Activated B cell treated with CpG ODN at 0.5 μM for 24 hours (primary cell): ENCODE measurements at regions of chr7 and their contacts with region 1.

Region 1: GRCh38 chr7:116984917-116985316 is 31.6 kb downstream of the ST7 start:
- DNase-seq: no peak
- ATAC-seq: peak; percentile 49
- H3K4me3 Mint-ChIP-seq: no peak overlapping the region
- H3K27ac Mint-ChIP-seq: no peak overlapping the region
- H3K4me1 Mint-ChIP-seq: no peaks in the 10 kb centered on the region
- H3K27me3 Mint-ChIP-seq: no peaks in the 10 kb centered on the region
- CTCF ChIP-seq: peak; percentile 76

Region 2: GRCh38 chr7:116953727-116954442 is 31.0 kb before region 1 on chr7:
- CTCF ChIA-PET with region 1: interaction called, 5 read pairs
- POLR2A ChIA-PET with region 1: interaction called, 3 read pairs
- intact Hi-C with region 1: loop called (anchors 2 kb)
- DNase-seq: peak; percentile 60
- ATAC-seq: peak; percentile 59
- H3K4me3 Mint-ChIP-seq: peak overlapping the region; percentile 93
- H3K27ac Mint-ChIP-seq: peak overlapping the region; percentile 86
- H3K4me1 Mint-ChIP-seq: peaks cover 27% of the 10 kb centered on the region
- H3K27me3 Mint-ChIP-seq: no peaks in the 10 kb centered on the region
- CTCF ChIP-seq: no peak

Region 3: GRCh38 chr7:117014673-117015133 is 29.8 kb after region 1 on chr7:
- CTCF ChIA-PET with region 1: interaction called, 39 read pairs
- POLR2A ChIA-PET with region 1: interaction called, 4 read pairs
- intact Hi-C with region 1: loop called (anchors 1 kb)
- DNase-seq: no peak
- ATAC-seq: no peak
- H3K4me3 Mint-ChIP-seq: no peak overlapping the region
- H3K27ac Mint-ChIP-seq: no peak overlapping the region
- H3K4me1 Mint-ChIP-seq: peaks cover 50% of the 10 kb centered on the region
- H3K27me3 Mint-ChIP-seq: peaks cover 3% of the 10 kb centered on the region
- CTCF ChIP-seq: no peak

Region 4: DNA sequence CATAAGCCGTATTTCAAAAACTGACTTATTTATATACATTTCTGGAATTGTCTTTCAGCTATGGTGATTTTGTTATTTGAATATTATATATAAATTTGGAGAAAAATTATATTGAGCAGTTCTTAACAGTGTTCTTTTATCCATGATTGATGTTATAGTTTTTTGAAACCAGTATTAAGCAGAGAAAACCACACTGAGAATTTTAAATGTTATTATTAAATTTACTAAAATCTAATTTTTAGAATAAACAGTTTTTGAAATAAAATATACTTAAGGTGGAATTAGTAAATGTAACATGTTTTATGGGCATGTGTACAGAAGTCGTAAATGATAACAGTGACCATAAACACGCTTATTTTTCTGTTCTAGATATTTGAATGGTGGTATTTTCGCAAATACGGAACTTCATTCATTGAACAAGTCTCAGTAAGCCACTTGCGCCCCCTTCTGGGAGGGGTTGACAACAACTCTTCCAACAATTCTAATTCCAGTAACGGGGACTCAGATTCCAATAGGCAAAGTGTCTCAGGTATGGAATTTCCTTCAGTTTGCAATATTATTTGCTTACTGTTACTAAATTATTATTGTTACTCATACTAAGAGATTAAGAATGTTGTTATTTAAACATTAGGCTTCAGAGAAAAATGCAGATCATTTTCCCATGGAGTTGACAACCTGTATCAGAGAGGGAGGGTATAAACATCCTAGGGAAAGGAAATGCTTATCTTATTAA is 134.4 kb after region 1 on chr7:
- CTCF ChIA-PET with region 1: interaction called, 225 read pairs
- POLR2A ChIA-PET with region 1: no interaction called
- intact Hi-C with region 1: loop called (anchors 1 kb)
- DNase-seq: peak; percentile 41
- ATAC-seq: no peak
- H3K4me3 Mint-ChIP-seq: no peak overlapping the region
- H3K27ac Mint-ChIP-seq: no peak overlapping the region
- H3K4me1 Mint-ChIP-seq: no peaks in the 10 kb centered on the region
- H3K27me3 Mint-ChIP-seq: no peaks in the 10 kb centered on the region
- CTCF ChIP-seq: peak; percentile 66

Region 5: DNA sequence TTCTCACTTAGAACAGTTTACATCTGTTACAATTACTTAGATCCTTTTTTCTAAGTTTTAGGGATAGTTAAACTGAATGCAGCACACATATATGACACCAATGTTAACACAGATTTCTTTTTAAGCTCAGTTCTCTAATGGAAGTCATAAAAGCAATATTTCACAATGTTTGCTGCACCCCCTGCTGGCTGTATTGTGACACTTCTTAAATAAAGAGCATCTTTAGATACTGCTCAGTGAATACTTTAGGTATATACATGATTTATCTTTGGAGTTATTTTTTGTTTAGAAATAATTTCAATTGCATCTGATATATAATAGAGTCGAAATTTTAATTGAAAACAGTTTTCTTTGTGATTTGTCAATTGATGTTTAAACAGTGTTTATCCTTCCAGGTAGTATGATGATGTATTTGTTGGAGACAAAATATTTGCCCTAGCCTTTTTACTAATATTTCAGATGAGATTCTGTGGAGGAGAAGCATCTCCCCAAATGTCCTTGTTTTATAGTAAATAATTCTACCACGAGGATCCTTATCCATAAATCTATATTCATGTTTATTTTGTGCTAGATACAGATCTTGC is 142.8 kb after region 1 on chr7:
- CTCF ChIA-PET with region 1: interaction called, 225 read pairs
- POLR2A ChIA-PET with region 1: no interaction called
- intact Hi-C with region 1: loop called (anchors 1 kb)
- DNase-seq: no peak
- ATAC-seq: peak; percentile 40
- H3K4me3 Mint-ChIP-seq: no peak overlapping the region
- H3K27ac Mint-ChIP-seq: no peak overlapping the region
- H3K4me1 Mint-ChIP-seq: no peaks in the 10 kb centered on the region
- H3K27me3 Mint-ChIP-seq: no peaks in the 10 kb centered on the region
- CTCF ChIP-seq: no peak

Region 6: GRCh38 chr7:117259615-117260014 is 274.7 kb after region 1 on chr7:
- CTCF ChIA-PET with region 1: no interaction called
- POLR2A ChIA-PET with region 1: no interaction called
- intact Hi-C with region 1: no loop called
- DNase-seq: no peak
- ATAC-seq: no peak
- H3K4me3 Mint-ChIP-seq: no peak overlapping the region
- H3K27ac Mint-ChIP-seq: no peak overlapping the region
- H3K4me1 Mint-ChIP-seq: no peaks in the 10 kb centered on the region
- H3K27me3 Mint-ChIP-seq: no peaks in the 10 kb centered on the region
- CTCF ChIP-seq: no peak